Uterus (tissue), 4 donors: ENCODE measurements at regions of chr12 and their contacts with region 1.

Region 1: DNA sequence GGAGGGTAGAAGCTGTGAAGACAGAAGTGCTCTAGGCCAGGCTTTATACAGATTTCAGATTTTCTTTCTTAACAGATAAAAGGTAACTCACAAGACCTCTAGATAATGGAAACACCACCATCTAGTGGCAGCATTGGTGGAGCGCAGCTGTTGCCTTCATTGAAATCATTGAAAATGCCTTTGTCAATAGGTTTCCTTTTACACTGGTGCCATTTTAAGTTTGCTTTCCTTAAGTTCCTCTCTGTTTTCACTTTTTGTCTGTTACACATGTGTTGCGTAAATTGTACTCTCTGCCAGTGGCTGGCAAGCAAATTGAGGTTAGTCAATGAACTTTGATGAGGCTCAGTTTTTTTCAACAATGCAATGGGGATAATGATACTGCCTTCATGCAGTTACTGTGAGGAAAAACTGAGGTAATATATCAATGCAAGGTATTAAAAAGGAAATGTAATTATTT is 31.1 kb downstream of the ALDH1L2 start:
- DNase-seq: peak; percentile 58 to 65
- H3K4me3 ChIP-seq: no peak overlapping the region
- H3K27ac ChIP-seq: no peak overlapping the region
- H3K4me1 ChIP-seq: no peaks in the 10 kb centered on the region
- H3K27me3 ChIP-seq: no peaks in the 10 kb centered on the region
- CTCF ChIP-seq: peak; percentile 80 to 87 (median 84)
- POLR2A ChIP-seq: no peak

Region 2: GRCh38 chr12:104371043-104371870 is 681.9 kb before region 1 on chr12:
- intact Hi-C with region 1: loop called (anchors 10 kb)
- DNase-seq: no peak
- H3K4me3 ChIP-seq: no peak overlapping the region
- H3K27ac ChIP-seq: no peak overlapping the region
- H3K4me1 ChIP-seq: no peaks in the 10 kb centered on the region
- H3K27me3 ChIP-seq: no peaks in the 10 kb centered on the region
- CTCF ChIP-seq: no peak
- POLR2A ChIP-seq: no peak

Region 3: GRCh38 chr12:105120551-105120950 is 67.4 kb after region 1 on chr12:
- intact Hi-C with region 1: no loop called
- DNase-seq: no peak
- H3K4me3 ChIP-seq: no peak overlapping the region
- H3K27ac ChIP-seq: no peak overlapping the region
- H3K4me1 ChIP-seq: no peaks in the 10 kb centered on the region
- H3K27me3 ChIP-seq: no peaks in the 10 kb centered on the region
- CTCF ChIP-seq: no peak
- POLR2A ChIP-seq: no peak